ENCODE measurements at regions of chr17 and their contacts with region 1.

Region 1: GRCh38 chr17:27381007-27381501 is 75.2 kb upstream of the KSR1 start:
- DNase-seq: peak; percentile 87 to 92 (median 90)
- H3K4me3 ChIP-seq: peak overlapping the region in 2 of 7 experiments; percentile 44 to 66
- H3K27ac ChIP-seq: no peak overlapping the region
- H3K4me1 ChIP-seq: peaks cover 0 to 30% (median 21%) of the 10 kb centered on the region in 4 experiments
- H3K27me3 ChIP-seq: no peaks in the 10 kb centered on the region

Region 2: DNA sequence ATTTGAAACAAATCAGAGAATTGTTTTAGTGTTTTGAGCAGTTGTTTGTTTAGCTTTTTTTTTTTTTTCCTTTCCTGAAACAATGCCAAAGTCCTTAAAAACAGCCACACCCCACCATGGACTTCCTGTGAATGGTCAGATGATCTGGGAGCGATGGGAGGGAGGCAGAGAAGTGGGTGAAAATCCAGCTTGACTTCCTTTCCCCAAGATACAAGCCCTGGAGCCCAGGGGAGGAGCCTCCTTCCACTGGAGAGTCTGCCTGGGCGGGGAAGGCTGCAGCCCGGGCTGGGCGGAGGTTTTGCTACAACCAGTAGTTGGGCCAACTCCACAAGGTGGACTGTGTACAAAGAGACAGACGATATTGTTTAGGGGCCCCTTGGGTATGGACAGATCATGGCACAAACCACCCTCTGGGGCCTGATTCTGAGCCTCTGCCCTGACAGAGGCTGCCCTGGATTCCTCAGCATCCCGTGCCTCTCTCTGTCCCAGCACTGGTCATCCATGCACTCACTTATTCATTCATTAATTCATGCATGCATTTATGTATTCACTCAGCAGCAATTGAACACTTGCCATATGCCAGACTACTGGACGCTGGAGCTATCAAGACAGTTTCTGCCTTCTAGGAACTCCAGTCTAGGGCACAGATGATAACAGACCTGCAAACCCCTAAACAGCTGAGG is 57.4 kb before region 1 on chr17:
- CTCF ChIA-PET with region 1: no interaction called
- POLR2A ChIA-PET with region 1: no interaction called
- DNase-seq: no peak
- H3K4me3 ChIP-seq: no peak overlapping the region
- H3K27ac ChIP-seq: no peak overlapping the region
- H3K4me1 ChIP-seq: peaks cover 0 to 5% (median 1%) of the 10 kb centered on the region in 4 experiments
- H3K27me3 ChIP-seq: no peaks in the 10 kb centered on the region

Region 3: DNA sequence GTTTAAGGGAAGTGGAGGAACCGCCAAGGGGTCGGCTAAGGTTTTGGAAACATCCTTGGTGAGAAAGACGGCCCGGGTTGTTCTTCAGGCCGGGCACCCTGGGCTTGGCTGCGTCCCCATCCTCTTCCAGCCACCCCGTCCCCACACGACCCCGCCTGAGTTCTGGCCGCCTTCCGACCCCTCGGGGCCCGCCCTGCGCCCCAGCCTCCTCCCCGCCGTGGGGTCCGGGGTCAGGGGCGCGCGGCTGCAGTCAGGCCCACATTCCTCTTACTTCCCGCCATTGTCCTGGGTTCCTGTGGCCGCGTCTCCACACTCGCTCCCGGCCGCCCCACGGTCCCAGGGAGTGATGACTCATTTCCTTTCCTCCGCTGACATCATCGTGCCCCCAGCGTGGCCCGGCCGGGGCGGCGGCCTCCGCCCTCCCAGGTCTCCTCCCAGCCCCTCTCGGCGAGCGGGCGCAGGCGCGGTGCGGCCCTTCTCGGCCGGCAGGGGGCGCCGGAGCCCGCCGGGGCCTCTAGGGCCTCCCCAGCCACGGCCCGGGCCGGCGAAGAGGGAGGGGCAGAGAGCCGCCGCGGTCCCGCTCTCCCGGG is 27.5 kb before region 1 on chr17:
- CTCF ChIA-PET with region 1: interaction called, 30 read pairs
- POLR2A ChIA-PET with region 1: no interaction called
- DNase-seq: peak; percentile 91 to 94 (median 93)
- H3K4me3 ChIP-seq: peak overlapping the region; percentile 51 to 83 (median 76)
- H3K27ac ChIP-seq: peak overlapping the region; percentile 85 to 96
- H3K4me1 ChIP-seq: peaks cover 0 to 32% (median 21%) of the 10 kb centered on the region in 4 experiments
- H3K27me3 ChIP-seq: no peaks in the 10 kb centered on the region

Region 4: GRCh38 chr17:27360507-27360906 is 20.5 kb before region 1 on chr17:
- CTCF ChIA-PET with region 1: interaction called, 45 read pairs
- POLR2A ChIA-PET with region 1: no interaction called
- DNase-seq: no peak
- H3K4me3 ChIP-seq: no peak overlapping the region
- H3K27ac ChIP-seq: no peak overlapping the region
- H3K4me1 ChIP-seq: peaks cover 0 to 9% (median 5%) of the 10 kb centered on the region in 4 experiments
- H3K27me3 ChIP-seq: no peaks in the 10 kb centered on the region

Region 5: DNA sequence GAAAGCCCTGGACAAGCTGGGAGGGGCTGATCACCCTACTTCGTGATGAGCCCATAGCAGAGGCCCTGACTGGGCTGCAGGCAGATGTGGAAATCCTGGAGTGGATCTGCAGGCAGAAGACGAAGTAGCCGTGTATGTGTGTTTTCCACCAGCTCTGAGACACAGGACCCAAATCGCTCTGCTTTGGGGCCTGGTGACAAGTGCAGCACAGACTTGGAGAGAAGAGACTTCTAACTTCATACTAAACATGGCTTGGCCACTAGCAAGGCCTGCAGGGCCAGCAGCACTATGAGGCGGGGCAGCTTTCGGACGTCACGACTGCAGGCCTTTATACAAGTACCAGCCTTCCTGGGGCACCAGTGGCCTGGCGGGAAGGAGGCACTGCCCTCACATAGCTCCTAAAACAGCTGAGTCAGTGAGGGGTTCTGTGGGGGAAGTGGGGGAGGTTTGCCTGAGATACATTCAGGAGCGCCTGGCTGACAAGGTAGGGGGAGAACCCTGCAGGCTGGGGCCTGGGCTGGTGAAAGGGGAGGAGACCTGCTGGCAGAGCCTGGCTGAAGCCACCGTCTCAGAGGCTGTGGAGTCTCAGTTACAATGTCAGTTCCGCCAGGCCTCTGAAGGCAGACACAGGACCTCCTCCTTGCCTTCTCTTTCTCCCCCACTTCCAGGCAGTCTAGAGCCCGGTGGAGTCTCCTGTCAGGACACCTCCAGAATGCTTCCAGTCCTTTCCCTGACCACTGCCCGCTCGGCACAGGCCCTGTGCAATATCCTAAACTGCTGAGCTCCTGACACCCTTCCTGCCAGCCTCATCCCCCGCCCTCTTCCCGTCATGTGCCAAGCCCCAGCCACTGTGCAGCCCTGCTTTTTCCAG is 13.7 kb before region 1 on chr17:
- CTCF ChIA-PET with region 1: interaction called, 45 read pairs
- POLR2A ChIA-PET with region 1: interaction called, 3 read pairs
- DNase-seq: peak; percentile 77 to 94 (median 90)
- H3K4me3 ChIP-seq: peak overlapping the region in 3 of 7 experiments; percentile 11 to 48 (median 26)
- H3K27ac ChIP-seq: peak overlapping the region; percentile 20 to 54
- H3K4me1 ChIP-seq: peaks cover 0 to 28% (median 17%) of the 10 kb centered on the region in 4 experiments
- H3K27me3 ChIP-seq: no peaks in the 10 kb centered on the region